ENCODE measurements at regions of chr6 and their contacts with region 1.

Region 1: GRCh38 chr6:30646458-30647241 is at the start of gene C6orf136:
- DNase-seq: peak; percentile 95 to 99 (median 98)
- ATAC-seq: peak; percentile 87
- H3K4me3 ChIP-seq: peak within 1 kb of the TSS; percentile 68
- H3K27ac ChIP-seq: peak within 1 kb of the TSS; percentile 83
- H3K4me1 ChIP-seq: peaks cover 15 to 29% of the 10 kb centered on the region in 2 experiments
- H3K27me3 ChIP-seq: no peaks in the 10 kb centered on the region
- CTCF ChIP-seq: no peak
- EP300 ChIP-seq: no peak
- POLR2A ChIP-seq: no peak
- RAD21 ChIP-seq: no peak
- polyA plus RNA-seq, gene C6orf136: 18.4 to 18.5 TPM

Region 2: DNA sequence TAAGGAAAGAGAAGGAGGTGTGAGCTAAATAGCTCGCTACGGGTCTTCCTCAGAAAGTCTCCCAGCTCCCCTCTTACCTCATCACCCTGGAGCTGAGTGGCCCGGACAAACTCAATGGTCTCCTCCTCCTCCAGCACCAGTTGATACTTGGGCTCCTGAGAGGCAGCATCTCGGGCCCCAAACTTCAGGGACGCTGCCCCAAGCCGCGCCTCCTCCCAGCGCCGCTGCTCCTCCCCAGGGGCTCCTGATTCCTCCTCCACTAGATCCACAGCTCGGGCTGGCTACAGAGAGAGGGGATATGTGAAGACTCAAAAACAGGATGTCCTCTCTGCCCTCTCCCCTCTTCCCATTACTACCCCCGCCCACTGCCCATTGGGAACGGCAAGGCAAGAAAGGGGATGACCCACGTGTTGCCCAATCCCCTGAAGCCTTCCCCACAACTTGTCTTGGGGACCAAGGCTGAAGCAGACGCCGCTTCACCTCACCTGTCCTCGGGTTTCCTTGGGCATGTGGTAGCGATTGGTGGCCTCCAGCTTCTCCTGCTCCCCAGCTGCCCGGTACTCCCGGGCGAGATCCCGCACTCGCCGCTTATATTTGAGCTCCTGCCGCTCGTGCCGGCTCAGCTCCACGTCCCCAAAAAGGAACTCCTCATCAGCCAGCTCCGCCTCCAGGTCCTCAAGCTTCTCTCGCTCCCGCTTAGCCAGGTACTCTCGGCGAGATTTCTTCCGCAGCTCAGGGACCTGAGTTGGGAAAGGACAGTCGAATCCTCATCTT is 18.5 kb after region 1 on chr6:
- CTCF ChIA-PET with region 1: no interaction called
- POLR2A ChIA-PET with region 1: interaction called, 12 read pairs
- in situ Hi-C with region 1: no loop called
- intact Hi-C with region 1: no loop called
- DNase-seq: no peak
- ATAC-seq: no peak
- H3K4me3 ChIP-seq: no peak overlapping the region
- H3K27ac ChIP-seq: no peak overlapping the region
- H3K4me1 ChIP-seq: peaks cover 7 to 9% of the 10 kb centered on the region in 2 experiments
- H3K27me3 ChIP-seq: no peaks in the 10 kb centered on the region
- CTCF ChIP-seq: no peak
- EP300 ChIP-seq: no peak
- POLR2A ChIP-seq: no peak
- RAD21 ChIP-seq: no peak

Region 3: DNA sequence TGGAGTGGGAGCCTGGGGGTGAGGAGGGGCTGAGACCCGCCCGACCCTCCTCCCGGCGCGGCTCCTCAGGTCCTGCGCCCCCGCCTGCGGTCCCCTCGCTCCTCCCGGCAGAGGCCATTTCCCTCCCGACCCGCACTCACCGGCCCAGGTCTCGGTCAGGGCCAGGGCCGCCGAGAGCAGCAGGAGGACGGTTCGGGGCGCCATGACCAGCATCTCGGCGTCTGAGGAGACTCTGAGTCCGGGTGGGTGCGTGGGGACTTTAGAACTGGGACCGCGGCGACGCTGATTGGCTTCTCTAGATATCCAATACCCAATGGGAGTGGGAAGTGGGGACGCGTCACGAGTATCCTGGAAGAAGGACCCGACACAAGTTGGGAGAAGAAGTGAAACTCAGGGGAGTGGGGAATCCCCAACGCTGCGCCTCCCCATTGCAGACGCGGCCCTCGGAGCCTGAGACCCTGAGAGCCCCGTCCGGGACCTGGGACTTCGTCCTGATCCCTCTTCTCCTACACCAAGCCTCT is 710.4 kb after region 1 on chr6 and contains the start of gene HLA-B:
- CTCF ChIA-PET with region 1: no interaction called
- POLR2A ChIA-PET with region 1: no interaction called
- in situ Hi-C with region 1: no loop called
- intact Hi-C with region 1: no loop called
- DNase-seq: peak in 2 of 4 experiments; percentile 9 to 31
- ATAC-seq: peak; percentile 88
- H3K4me3 ChIP-seq: no peak within 1 kb of the TSS
- H3K27ac ChIP-seq: no peak within 1 kb of the TSS
- H3K4me1 ChIP-seq: peaks cover 0 to 12% of the 10 kb centered on the region in 2 experiments; a peak in 2 of 5 replicates
- H3K27me3 ChIP-seq: peaks cover 23 to 37% of the 10 kb centered on the region in 2 experiments
- CTCF ChIP-seq: no peak
- EP300 ChIP-seq: no peak
- POLR2A ChIP-seq: no peak
- RAD21 ChIP-seq: no peak
- polyA plus RNA-seq, gene HLA-B: 0.07 to 0.66 TPM